ENCODE measurements at regions of chr22 and their contacts with region 1.

Region 1: DNA sequence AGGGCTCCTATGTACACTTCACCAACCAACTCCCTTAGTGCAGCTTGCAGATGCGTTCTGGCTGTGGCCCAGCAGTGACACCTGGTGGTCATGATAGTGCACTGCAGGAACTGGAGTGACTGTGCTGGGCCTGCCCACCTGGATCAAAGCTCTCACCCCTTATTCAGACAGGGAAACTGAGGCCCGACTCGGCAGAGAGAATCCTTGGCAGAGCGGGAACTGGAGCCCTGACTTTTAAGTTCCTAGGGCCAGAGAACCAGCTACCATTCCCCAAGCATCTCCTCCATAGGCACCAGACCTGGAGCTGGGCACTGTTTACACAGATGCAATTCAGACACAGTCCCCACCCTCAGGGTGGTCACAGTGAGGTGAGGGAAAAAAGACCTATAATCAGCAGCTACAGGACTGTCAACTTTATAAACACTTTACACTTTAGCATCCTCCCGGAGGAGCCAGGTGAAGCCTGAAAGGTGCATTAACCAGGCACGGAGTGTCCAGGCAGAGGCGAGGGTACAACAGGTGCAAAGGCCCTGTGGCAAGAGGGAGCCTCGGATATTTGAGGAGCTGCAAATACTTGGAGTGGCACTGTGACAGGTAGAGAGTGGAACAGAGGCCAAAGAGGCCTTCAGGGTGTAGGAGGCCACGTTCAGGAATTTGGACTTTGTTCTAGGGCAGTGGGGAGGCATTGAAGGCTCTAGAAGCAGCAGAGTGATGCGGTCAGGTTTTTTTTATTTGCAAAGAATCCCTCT is 22.0 kb downstream of the RHBDD3 start:
- DNase-seq: peak; percentile 61 to 82 (median 80)
- H3K4me3 ChIP-seq: no peak overlapping the region
- H3K27ac ChIP-seq: no peak overlapping the region
- H3K4me1 ChIP-seq: peaks cover 1% of the 10 kb centered on the region
- H3K27me3 ChIP-seq: no peaks in the 10 kb centered on the region
- CTCF ChIP-seq: peak; percentile 93 to 96 (median 94)
- EP300 ChIP-seq: no peak
- POLR2A ChIP-seq: no peak

Region 2: GRCh38 chr22:28855355-28856094 is 390.3 kb before region 1 on chr22:
- intact Hi-C with region 1: loop called in 2 of 4 experiments (anchors 5 to 10 kb)
- DNase-seq: peak in 3 of 5 donors; percentile 29 to 63 (median 30)
- H3K4me3 ChIP-seq: no peak overlapping the region
- H3K27ac ChIP-seq: no peak overlapping the region
- H3K4me1 ChIP-seq: no peaks in the 10 kb centered on the region
- H3K27me3 ChIP-seq: no peaks in the 10 kb centered on the region
- CTCF ChIP-seq: peak; percentile 91 to 96 (median 95)
- EP300 ChIP-seq: no peak
- POLR2A ChIP-seq: no peak

Region 3: DNA sequence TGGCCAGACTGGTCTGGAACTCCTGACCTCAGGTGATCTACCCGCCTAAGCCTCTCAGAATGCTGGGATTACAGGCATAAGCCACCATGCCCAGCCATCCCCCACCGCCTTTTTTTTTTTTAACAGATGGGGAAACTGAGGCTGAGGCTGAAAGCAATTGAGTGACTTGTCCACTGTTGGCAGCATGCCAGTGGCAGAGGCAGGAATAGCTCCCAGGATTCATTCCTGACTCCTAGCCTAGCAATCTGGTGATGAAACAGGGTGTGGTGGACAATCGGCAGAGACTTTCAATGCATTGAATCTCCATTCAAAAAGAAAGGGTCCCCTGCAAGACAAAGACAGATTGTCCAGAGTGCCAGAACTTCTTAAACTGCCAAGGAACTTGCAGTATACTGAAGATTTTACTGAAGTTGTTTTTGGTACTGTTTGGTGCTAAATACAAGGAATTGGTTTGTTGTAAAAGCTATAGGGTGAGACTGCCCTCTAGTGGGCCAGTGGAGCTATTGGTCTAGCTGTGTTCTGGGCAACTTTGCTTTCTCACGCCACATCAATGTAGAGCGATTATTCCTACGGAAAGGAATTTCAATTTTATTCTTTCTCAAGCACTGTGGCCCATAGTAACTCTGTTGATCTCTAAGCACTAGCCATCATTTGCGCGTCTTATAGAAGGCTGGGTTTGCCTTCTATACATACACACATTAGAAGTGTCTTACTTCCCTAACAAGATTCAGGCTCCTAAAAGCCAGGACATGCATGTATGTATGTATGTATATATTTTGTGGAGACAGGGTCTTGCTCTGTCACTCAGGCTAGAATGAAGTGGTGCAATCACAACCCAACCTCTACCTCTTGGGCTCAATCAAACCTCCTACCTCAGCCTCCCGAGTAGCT is 205.2 kb before region 1 on chr22:
- intact Hi-C with region 1: loop called in 1 of 4 experiments (anchors 5 kb)
- DNase-seq: peak; percentile 61 to 83 (median 70)
- H3K4me3 ChIP-seq: no peak overlapping the region
- H3K27ac ChIP-seq: no peak overlapping the region
- H3K4me1 ChIP-seq: peaks cover 9% of the 10 kb centered on the region
- H3K27me3 ChIP-seq: no peaks in the 10 kb centered on the region
- CTCF ChIP-seq: peak; percentile 86 to 95 (median 92)
- EP300 ChIP-seq: no peak
- POLR2A ChIP-seq: no peak

Region 4: GRCh38 chr22:29055192-29055830 is 190.5 kb before region 1 on chr22:
- intact Hi-C with region 1: loop called in 2 of 4 experiments (anchors 10 kb)
- DNase-seq: no peak
- H3K4me3 ChIP-seq: no peak overlapping the region
- H3K27ac ChIP-seq: no peak overlapping the region
- H3K4me1 ChIP-seq: no peaks in the 10 kb centered on the region
- H3K27me3 ChIP-seq: no peaks in the 10 kb centered on the region
- CTCF ChIP-seq: no peak
- EP300 ChIP-seq: no peak
- POLR2A ChIP-seq: no peak

Region 5: DNA sequence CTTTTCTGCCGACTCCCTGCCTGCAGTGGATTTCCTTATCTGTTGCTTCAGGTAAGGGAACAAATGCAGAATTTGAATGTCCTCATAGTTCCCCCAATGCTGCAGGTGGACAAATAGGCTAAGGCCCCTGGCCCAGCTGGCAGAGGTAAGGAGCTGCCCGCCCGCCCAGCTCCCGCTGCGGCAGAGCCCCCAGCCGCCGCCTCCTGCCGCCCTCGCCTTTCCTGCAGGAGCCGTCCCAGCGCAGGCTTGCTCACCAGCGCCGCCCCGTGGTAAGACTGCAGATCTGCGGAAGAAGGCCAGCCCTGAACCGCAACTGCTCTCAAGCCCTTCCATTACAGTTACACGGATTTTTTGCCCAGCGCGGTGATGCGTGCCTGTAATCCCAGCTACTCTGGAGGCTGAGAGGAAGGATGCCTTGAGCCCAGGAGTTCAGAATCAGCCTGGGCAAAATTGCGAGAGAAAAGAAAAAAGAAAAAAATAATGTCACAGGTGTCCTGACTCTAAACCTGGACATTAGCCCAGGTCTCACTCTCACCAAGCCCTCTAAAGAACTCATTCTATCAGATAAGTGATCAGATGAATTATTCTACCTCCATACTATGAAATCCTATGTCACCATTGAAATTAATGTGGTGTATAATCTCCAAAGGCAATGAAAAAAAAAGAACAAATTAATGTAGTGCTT is 91.3 kb before region 1 on chr22:
- intact Hi-C with region 1: loop called in 2 of 4 experiments (anchors 5 to 10 kb)
- DNase-seq: peak; percentile 68 to 86 (median 83)
- H3K4me3 ChIP-seq: no peak overlapping the region
- H3K27ac ChIP-seq: peak overlapping the region in 1 of 2 donors; percentile 34
- H3K4me1 ChIP-seq: peaks cover 3% of the 10 kb centered on the region
- H3K27me3 ChIP-seq: no peaks in the 10 kb centered on the region
- CTCF ChIP-seq: peak; percentile 88 to 89 (median 89)
- EP300 ChIP-seq: no peak
- POLR2A ChIP-seq: no peak

Region 6: GRCh38 chr22:29635734-29636357 is 390.0 kb after region 1 on chr22:
- intact Hi-C with region 1: no loop called
- DNase-seq: no peak
- H3K4me3 ChIP-seq: no peak overlapping the region
- H3K27ac ChIP-seq: no peak overlapping the region
- H3K4me1 ChIP-seq: peaks cover 1% of the 10 kb centered on the region
- H3K27me3 ChIP-seq: no peaks in the 10 kb centered on the region
- CTCF ChIP-seq: peak in 1 of 3 donors; percentile 30
- EP300 ChIP-seq: no peak
- POLR2A ChIP-seq: no peak

Measured in ovary (tissue), 10 donors.